Colonic mucosa (tissue), 4 donors: ENCODE measurements at regions of chr14 and their contacts with region 1.

Region 1: GRCh38 chr14:51283402-51284085 is 43.5 kb downstream of the TMX1 start:
- DNase-seq: no peak
- H3K4me3 ChIP-seq: no peak overlapping the region
- H3K27ac ChIP-seq: no peak overlapping the region
- H3K4me1 ChIP-seq: no peaks in the 10 kb centered on the region
- H3K27me3 ChIP-seq: no peaks in the 10 kb centered on the region
- CTCF ChIP-seq: peak; percentile 63

Region 2: GRCh38 chr14:51554953-51555352 is 271.4 kb after region 1 on chr14:
- intact Hi-C with region 1: loop called (anchors 10 kb)
- DNase-seq: no peak
- H3K4me3 ChIP-seq: no peak overlapping the region
- H3K27ac ChIP-seq: no peak overlapping the region
- H3K4me1 ChIP-seq: no peaks in the 10 kb centered on the region
- H3K27me3 ChIP-seq: no peaks in the 10 kb centered on the region
- CTCF ChIP-seq: no peak

Region 3: DNA sequence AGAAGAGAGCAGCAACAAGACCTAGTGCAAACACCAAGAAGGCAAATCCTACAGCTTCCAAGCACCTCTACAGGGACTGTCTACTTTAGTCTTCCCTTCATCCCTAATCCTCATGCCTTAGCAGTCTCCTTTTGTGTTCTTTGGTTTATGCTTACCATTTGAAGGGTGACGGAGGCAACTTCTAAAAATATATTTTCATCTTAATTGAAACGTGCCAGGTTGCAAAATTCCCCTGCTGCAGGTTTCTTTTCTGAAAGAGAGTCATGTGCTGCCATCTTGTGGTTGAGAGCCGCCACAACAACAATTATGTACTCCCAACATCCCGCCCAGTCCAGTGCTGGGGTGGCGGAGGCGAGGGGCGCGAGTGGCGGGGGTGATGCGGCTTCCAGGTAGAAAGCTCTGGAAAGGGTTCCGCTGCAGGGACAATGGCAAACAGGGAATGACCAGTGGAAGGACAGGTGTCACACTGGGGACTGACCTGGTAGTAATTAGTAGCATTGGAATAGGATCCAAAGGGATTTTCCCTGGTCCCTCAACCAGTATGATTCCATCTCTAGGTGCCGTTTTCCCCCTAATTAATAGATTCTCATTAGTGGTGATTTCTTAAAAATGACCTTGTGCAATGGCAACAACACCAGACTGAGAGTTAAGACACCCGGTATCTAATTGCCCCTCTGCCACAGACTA is 496.6 kb after region 1 on chr14:
- intact Hi-C with region 1: loop called (anchors 2 kb)
- DNase-seq: peak; percentile 75
- H3K4me3 ChIP-seq: no peak overlapping the region
- H3K27ac ChIP-seq: no peak overlapping the region
- H3K4me1 ChIP-seq: no peaks in the 10 kb centered on the region
- H3K27me3 ChIP-seq: no peaks in the 10 kb centered on the region
- CTCF ChIP-seq: peak; percentile 85

Region 4: DNA sequence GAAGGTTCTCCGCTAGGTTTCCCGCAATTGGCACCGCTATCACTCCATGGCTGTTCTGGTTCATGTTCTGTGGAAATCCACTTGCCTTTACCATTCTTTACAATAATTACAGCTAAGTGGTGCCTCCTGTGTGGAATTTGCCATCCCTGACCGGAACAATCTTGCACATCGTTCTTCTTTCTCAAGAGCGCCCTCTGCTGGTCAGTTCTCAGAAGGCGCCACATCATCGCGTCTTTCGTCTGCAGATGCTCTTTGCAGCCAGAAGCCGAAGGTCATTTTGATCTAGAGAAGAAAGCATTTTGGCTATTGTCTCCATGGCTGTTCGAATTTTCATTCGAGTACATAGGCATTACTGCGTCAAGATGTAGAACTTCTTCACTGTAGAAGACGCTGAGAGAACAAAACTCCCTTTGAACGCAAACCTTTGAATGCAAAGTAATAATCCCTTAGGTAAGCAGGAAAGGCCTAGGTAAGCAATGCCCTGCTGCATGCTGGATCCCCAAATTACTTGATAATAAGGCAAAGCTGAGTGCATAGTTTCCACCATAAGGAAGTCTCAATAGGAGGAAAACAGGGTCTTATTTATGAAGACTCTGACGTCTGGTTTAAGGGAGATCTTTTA is 695.7 kb after region 1 on chr14:
- intact Hi-C with region 1: loop called (anchors 5 kb)
- DNase-seq: peak; percentile 89
- H3K4me3 ChIP-seq: no peak overlapping the region
- H3K27ac ChIP-seq: no peak overlapping the region
- H3K4me1 ChIP-seq: no peaks in the 10 kb centered on the region
- H3K27me3 ChIP-seq: no peaks in the 10 kb centered on the region
- CTCF ChIP-seq: peak; percentile 96